CD4-positive, alpha-beta T cell (primary cell): ENCODE measurements at regions of chr17 and their contacts with region 1.

Region 1: GRCh38 chr17:82037113-82037888 is at the start of gene DCXR:
- DNase-seq: peak; percentile 85 to 97 (median 94)
- ATAC-seq: peak; percentile 90
- H3K4me3 ChIP-seq: peak within 1 kb of the TSS; percentile 65
- H3K4me3 Mint-ChIP-seq: peak within 1 kb of the TSS; percentile 96
- H3K27ac ChIP-seq: peak within 1 kb of the TSS; percentile 45 to 55
- H3K27ac Mint-ChIP-seq: peak within 1 kb of the TSS; percentile 84
- H3K4me1 ChIP-seq: peaks cover 27% of the 10 kb centered on the region
- H3K4me1 Mint-ChIP-seq: peaks cover 26% of the 10 kb centered on the region
- H3K27me3 ChIP-seq: no peaks in the 10 kb centered on the region
- H3K27me3 Mint-ChIP-seq: no peaks in the 10 kb centered on the region
- CTCF ChIP-seq: peak; percentile 87
- total RNA-seq, gene DCXR: 103 to 119 TPM

Region 2: GRCh38 chr17:82012640-82013295 is 24.5 kb before region 1 on chr17:
- CTCF ChIA-PET with region 1: no interaction called
- POLR2A ChIA-PET with region 1: no interaction called
- intact Hi-C with region 1: no loop called
- DNase-seq: no peak
- ATAC-seq: no peak
- H3K4me3 ChIP-seq: no peak overlapping the region
- H3K4me3 Mint-ChIP-seq: no peak overlapping the region
- H3K27ac ChIP-seq: no peak overlapping the region
- H3K27ac Mint-ChIP-seq: no peak overlapping the region
- H3K4me1 ChIP-seq: no peaks in the 10 kb centered on the region
- H3K4me1 Mint-ChIP-seq: no peaks in the 10 kb centered on the region
- H3K27me3 ChIP-seq: no peaks in the 10 kb centered on the region
- H3K27me3 Mint-ChIP-seq: no peaks in the 10 kb centered on the region
- CTCF ChIP-seq: no peak

Region 3: GRCh38 chr17:82022981-82023374 is 14.3 kb before region 1 on chr17 and contains the start of gene LRRC45:
- CTCF ChIA-PET with region 1: interaction called, 8 read pairs
- POLR2A ChIA-PET with region 1: interaction called, 27 read pairs
- intact Hi-C with region 1: loop called in 1 of 2 experiments (anchors 1 kb)
- DNase-seq: peak; percentile 99 to 100 (median 100)
- ATAC-seq: peak; percentile 94
- H3K4me3 ChIP-seq: peak within 1 kb of the TSS; percentile 71
- H3K4me3 Mint-ChIP-seq: peak within 1 kb of the TSS; percentile 92
- H3K27ac ChIP-seq: peak within 1 kb of the TSS in 1 of 2 donors; percentile 46
- H3K27ac Mint-ChIP-seq: peak within 1 kb of the TSS; percentile 69
- H3K4me1 ChIP-seq: peaks cover 47% of the 10 kb centered on the region
- H3K4me1 Mint-ChIP-seq: peaks cover 21% of the 10 kb centered on the region
- H3K27me3 ChIP-seq: no peaks in the 10 kb centered on the region
- H3K27me3 Mint-ChIP-seq: no peaks in the 10 kb centered on the region
- CTCF ChIP-seq: no peak
- total RNA-seq, gene LRRC45: 17.7 to 17.9 TPM

Region 4: DNA sequence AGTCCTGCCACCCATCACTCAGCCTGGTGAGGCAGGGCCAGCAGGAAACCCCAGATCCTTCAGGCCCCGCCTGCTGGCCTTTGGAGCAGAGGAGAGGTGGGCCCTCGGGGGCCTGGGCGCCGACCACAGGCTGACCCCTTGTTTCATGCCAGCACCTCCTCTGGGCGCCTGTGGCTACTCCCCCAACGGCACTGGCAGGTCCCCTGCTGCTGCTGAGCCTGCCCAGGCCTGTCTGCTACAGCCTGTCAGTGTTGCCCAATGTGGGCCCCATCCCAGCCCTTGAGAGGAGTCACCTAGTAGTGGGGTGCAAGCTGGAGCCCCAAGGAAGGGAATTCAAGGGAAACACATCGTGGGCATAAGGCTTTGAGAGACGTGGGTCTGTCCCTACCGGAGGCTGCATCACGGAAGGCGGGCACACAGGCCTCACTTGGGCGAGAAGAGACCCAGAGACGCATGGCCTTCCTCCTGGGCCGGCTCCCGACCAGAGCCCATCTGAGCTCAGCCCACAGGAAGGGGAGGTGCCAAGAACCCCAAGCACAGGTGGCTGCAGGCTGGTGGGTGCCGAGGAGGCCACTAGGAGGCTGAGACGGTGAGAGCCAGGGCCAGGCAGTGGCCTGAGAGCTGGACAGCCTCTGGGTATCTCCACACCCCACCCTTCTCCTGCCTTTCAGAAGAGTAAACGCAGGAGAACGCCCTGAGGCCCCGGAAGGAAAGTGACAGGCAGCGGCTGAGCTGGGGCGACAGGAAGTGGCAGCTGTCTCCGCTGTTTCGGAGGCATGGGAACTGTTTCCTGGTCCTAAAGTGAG is 68.8 kb after region 1 on chr17:
- CTCF ChIA-PET with region 1: no interaction called
- POLR2A ChIA-PET with region 1: interaction called, 11 read pairs
- intact Hi-C with region 1: no loop called
- DNase-seq: peak in 13 of 14 experiments; percentile 32 to 78 (median 55)
- ATAC-seq: peak; percentile 70
- H3K4me3 ChIP-seq: peak overlapping the region; percentile 61
- H3K4me3 Mint-ChIP-seq: peak overlapping the region; percentile 83
- H3K27ac ChIP-seq: peak overlapping the region; percentile 79 to 90
- H3K27ac Mint-ChIP-seq: peak overlapping the region; percentile 95
- H3K4me1 ChIP-seq: peaks cover 43% of the 10 kb centered on the region
- H3K4me1 Mint-ChIP-seq: peaks cover 22% of the 10 kb centered on the region
- H3K27me3 ChIP-seq: no peaks in the 10 kb centered on the region
- H3K27me3 Mint-ChIP-seq: no peaks in the 10 kb centered on the region
- CTCF ChIP-seq: peak; percentile 36

Region 5: GRCh38 chr17:82126556-82127314 is 89.4 kb after region 1 on chr17:
- CTCF ChIA-PET with region 1: interaction called, 8 read pairs
- POLR2A ChIA-PET with region 1: interaction called, 15 read pairs
- intact Hi-C with region 1: loop called in 1 of 2 experiments (anchors 10 kb)
- DNase-seq: peak; percentile 77 to 98 (median 88)
- ATAC-seq: peak; percentile 78
- H3K4me3 ChIP-seq: peak overlapping the region; percentile 40
- H3K4me3 Mint-ChIP-seq: peak overlapping the region; percentile 39
- H3K27ac ChIP-seq: peak overlapping the region; percentile 83 to 94
- H3K27ac Mint-ChIP-seq: peak overlapping the region; percentile 97
- H3K4me1 ChIP-seq: peaks cover 79% of the 10 kb centered on the region
- H3K4me1 Mint-ChIP-seq: peaks cover 76% of the 10 kb centered on the region
- H3K27me3 ChIP-seq: no peaks in the 10 kb centered on the region
- H3K27me3 Mint-ChIP-seq: no peaks in the 10 kb centered on the region
- CTCF ChIP-seq: peak; percentile 19

Region 6: GRCh38 chr17:82292251-82293154 is 255.2 kb after region 1 on chr17:
- CTCF ChIA-PET with region 1: no interaction called
- POLR2A ChIA-PET with region 1: interaction called, 6 read pairs
- intact Hi-C with region 1: loop called in 1 of 2 experiments (anchors 10 kb)
- DNase-seq: peak; percentile 79 to 97 (median 90)
- ATAC-seq: peak; percentile 87
- H3K4me3 ChIP-seq: peak overlapping the region; percentile 68
- H3K4me3 Mint-ChIP-seq: peak overlapping the region; percentile 93
- H3K27ac ChIP-seq: peak overlapping the region; percentile 93 to 98
- H3K27ac Mint-ChIP-seq: peak overlapping the region; percentile 95
- H3K4me1 ChIP-seq: peaks cover 36% of the 10 kb centered on the region
- H3K4me1 Mint-ChIP-seq: peaks cover 51% of the 10 kb centered on the region
- H3K27me3 ChIP-seq: no peaks in the 10 kb centered on the region
- H3K27me3 Mint-ChIP-seq: no peaks in the 10 kb centered on the region
- CTCF ChIP-seq: no peak

Region 7: DNA sequence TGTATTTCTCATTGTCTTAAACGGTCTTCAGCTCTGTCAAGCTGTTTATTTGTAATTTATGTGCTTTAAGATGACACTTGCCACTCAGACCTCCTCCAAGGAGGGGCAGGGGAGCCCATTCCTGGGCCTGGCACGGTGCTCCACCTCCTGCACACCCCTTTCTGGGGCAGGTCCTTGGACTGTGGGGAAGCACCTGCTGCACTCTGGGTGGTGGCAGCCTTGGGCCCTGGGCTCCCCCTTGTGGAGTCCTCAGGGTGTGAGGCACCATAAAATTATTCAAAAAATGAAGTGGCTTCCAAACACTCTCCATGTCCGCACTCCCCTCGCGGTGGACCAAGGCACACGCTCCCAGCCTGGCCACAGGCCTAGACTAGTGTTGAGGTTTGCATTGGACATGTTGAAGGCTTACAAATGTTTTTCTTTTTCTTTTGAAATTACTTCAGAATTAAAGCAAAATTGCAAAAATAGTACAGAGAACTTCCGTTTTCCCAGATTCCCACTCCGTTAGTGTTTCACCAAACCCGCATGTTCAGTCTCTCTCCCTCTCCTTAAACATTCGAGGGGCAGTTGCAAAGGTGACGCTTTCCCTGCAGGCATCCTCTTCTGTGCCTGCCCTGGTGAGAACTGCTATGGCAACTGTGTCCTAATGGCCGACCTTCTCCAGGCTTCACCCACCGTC is 514.6 kb after region 1 on chr17:
- CTCF ChIA-PET with region 1: no interaction called
- POLR2A ChIA-PET with region 1: no interaction called
- intact Hi-C with region 1: loop called in 1 of 2 experiments (anchors 10 kb)
- DNase-seq: peak; percentile 59 to 88 (median 76)
- ATAC-seq: peak; percentile 100
- H3K4me3 ChIP-seq: no peak overlapping the region
- H3K4me3 Mint-ChIP-seq: no peak overlapping the region
- H3K27ac ChIP-seq: no peak overlapping the region
- H3K27ac Mint-ChIP-seq: peak overlapping the region; percentile 56
- H3K4me1 ChIP-seq: peaks cover 24% of the 10 kb centered on the region
- H3K4me1 Mint-ChIP-seq: peaks cover 40% of the 10 kb centered on the region
- H3K27me3 ChIP-seq: no peaks in the 10 kb centered on the region
- H3K27me3 Mint-ChIP-seq: no peaks in the 10 kb centered on the region
- CTCF ChIP-seq: peak; percentile 77